Mammary epithelial cell (primary cell): ENCODE measurements at regions of chr1 and their contacts with region 1.

Region 1: DNA sequence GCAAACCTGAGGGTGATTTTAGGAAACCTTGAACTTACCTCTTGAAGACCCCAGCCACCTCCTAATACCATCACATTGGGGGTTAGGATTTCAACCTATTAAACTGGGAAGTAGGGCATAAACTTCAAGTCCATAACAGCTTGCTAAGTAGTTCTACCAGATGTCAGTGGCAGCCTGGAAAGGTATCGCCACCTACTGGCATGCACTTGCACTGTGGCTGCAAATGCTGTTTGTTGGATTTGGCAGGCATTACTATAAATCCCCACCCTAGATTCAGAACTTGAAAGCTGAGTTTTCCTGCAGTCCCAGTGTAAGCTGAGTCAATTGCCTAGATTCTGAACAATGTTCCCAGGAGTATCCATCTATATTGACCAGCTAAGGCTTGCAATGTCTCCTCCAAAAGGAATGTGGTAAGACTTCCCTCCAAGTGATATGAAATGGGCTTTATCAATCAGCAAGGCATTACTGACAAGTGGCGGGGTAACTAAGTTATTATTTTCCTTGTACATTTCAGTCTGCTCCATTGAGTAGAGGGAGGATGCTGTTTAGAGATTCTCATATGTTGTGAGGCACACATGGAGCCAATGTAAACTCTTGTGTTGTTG is 474.5 kb downstream of the PTPRC start:
- DNase-seq: peak; percentile 39
- H3K4me3 ChIP-seq: no peak overlapping the region
- H3K27ac ChIP-seq: no peak overlapping the region
- H3K4me1 ChIP-seq: no peaks in the 10 kb centered on the region
- H3K27me3 ChIP-seq: no peaks in the 10 kb centered on the region
- CTCF ChIP-seq: peak; percentile 89 to 97

Region 2: DNA sequence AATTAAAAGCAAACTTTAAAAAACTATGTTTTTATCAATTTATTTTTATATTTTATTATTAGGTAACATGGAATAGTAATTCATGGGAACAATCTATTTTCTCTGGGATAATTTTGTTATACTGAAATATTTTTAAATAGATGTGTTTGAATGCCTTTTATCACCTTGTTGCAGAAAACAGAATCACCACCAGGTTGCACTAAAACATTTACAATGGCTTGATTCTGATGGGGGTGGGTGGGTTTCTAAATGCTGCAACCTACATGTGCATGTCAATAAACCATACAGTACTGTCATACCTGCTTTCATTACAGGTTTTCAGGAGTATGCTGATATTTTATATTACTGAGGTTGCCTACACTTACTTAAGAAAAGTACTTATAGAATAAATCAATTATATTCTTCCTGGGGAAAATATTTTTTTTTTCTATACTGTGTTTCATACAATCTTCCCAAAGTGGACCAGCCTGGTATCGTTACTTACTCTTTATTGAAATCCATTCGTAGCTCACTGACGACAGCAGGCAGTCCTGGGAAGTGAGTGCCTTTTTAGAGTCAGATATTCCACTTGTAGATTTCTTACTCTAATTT is 341.7 kb before region 1 on chr1:
- CTCF ChIA-PET with region 1: interaction called, 4 read pairs
- dilution Hi-C with region 1: no loop called
- in situ Hi-C with region 1: loop called in 1 of 2 experiments (anchors 25 kb)
- intact Hi-C with region 1: loop called (anchors 1 kb)
- DNase-seq: no peak
- H3K4me3 ChIP-seq: no peak overlapping the region
- H3K27ac ChIP-seq: no peak overlapping the region
- H3K4me1 ChIP-seq: peaks cover 13% of the 10 kb centered on the region
- H3K27me3 ChIP-seq: no peaks in the 10 kb centered on the region
- CTCF ChIP-seq: peak; percentile 51 to 59

Region 3: DNA sequence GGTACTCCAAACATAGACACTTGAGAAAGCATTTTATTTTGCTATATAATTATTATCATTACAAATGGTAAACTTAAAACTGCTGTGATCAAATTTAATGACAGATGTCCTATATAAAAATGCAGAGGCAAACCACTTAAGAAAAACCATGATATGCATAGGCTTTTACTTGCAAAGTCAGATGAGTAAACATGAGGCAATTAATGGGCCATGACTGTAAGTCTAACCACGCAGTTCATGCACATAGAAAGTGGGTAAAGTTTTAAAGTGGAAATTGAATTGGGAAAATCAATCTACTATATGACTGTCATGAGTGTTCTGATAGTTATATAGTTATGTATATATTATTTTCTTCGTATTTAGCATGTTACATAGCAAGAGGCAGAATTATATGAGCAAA is 255.3 kb before region 1 on chr1:
- CTCF ChIA-PET with region 1: no interaction called
- dilution Hi-C with region 1: no loop called
- in situ Hi-C with region 1: no loop called
- intact Hi-C with region 1: no loop called
- DNase-seq: no peak
- H3K4me3 ChIP-seq: no peak overlapping the region
- H3K27ac ChIP-seq: no peak overlapping the region
- H3K4me1 ChIP-seq: no peaks in the 10 kb centered on the region
- H3K27me3 ChIP-seq: no peaks in the 10 kb centered on the region
- CTCF ChIP-seq: no peak

Region 4: DNA sequence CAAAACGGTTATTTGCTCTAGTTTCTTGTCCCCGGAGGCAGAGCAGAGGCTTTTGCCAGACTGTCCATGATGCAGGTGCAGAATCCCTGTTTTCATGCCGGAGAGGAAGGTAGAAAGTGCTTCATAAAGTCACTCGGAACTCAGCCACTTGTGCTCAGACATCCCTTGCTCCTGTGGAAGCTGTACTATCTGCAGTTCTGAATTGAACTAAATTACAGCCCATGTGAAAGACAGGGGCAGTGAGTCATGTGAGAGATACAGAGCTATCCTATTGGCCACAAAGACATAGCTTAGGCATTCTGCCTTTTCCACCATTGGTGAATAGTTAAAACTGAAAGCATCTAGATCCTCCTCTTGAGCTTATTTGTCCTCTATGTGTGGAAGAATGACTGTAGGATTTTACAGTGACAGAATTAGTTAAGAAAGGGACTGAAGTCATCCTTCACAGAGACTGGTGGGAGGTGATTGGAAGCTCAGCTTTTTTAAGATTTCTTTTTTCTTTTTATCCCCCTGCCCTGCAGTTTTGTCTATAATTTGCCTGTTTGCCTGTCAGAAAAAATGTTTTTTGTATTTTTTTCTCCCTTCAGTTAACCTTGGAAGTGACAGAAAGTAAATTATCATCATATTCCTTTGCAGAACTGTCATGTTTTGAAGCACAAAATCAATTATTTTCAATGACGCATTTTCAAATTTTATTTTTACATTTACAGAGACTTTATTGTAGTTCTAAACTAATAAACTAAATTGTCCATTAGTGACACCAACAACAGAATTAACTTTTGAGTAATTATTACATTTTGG is 175.9 kb before region 1 on chr1:
- CTCF ChIA-PET with region 1: no interaction called
- dilution Hi-C with region 1: no loop called
- in situ Hi-C with region 1: no loop called
- intact Hi-C with region 1: loop called (anchors 1 kb)
- DNase-seq: peak; percentile 91
- H3K4me3 ChIP-seq: peak overlapping the region; percentile 68 to 80 (median 79)
- H3K27ac ChIP-seq: peak overlapping the region; percentile 81
- H3K4me1 ChIP-seq: no peaks in the 10 kb centered on the region
- H3K27me3 ChIP-seq: no peaks in the 10 kb centered on the region
- CTCF ChIP-seq: no peak

Region 5: DNA sequence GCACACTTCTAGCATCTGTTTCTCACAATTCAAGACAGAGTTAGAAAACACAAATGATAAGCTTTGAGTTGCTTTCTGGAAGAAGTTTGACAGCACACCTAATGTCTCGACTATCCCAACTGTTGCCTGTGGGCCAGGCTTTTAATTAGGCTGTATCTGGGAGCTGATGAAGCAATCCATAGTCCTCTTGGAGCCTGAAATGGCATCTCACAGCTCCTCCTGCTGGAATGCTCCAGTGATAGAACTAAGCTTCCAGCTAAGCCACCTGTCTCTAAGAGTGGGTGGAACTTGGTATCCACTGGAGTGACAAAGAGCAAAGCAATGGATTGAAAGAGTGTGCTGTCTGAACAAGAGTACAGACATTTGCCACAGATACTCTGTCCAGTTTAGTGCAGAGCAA is 308.8 kb after region 1 on chr1:
- CTCF ChIA-PET with region 1: interaction called, 5 read pairs
- dilution Hi-C with region 1: no loop called
- in situ Hi-C with region 1: no loop called
- intact Hi-C with region 1: loop called (anchors 2 kb)
- DNase-seq: peak; percentile 45
- H3K4me3 ChIP-seq: no peak overlapping the region
- H3K27ac ChIP-seq: no peak overlapping the region
- H3K4me1 ChIP-seq: no peaks in the 10 kb centered on the region
- H3K27me3 ChIP-seq: no peaks in the 10 kb centered on the region
- CTCF ChIP-seq: peak; percentile 44 to 69

Region 6: DNA sequence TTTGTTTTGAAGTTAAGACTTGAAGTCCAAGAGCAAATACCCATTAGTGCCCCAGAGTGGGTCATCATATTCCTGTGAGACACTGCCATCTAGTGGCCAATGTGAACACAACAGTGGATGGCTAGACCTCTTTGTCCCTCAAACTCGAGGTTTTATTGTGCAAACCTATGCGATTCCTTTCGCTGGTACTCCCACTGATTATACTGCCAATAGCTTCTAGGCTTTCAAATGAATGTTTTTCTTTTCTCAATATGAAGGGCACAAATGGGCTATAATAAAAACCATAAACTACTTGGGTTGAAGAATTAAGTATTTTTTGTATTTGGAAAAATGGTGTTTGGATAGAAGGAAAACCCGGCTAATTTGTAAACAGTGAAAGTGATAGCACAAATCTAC is 1396.9 kb after region 1 on chr1:
- CTCF ChIA-PET with region 1: no interaction called
- dilution Hi-C with region 1: no loop called
- in situ Hi-C with region 1: no loop called
- intact Hi-C with region 1: loop called (anchors 5 kb)
- DNase-seq: peak; percentile 60
- H3K4me3 ChIP-seq: no peak overlapping the region
- H3K27ac ChIP-seq: no peak overlapping the region
- H3K4me1 ChIP-seq: no peaks in the 10 kb centered on the region
- H3K27me3 ChIP-seq: peaks cover 3% of the 10 kb centered on the region
- CTCF ChIP-seq: peak; percentile 90 to 95